K562 (cell line): ENCODE measurements at regions of chr19 and their contacts with region 1.

Region 1: DNA sequence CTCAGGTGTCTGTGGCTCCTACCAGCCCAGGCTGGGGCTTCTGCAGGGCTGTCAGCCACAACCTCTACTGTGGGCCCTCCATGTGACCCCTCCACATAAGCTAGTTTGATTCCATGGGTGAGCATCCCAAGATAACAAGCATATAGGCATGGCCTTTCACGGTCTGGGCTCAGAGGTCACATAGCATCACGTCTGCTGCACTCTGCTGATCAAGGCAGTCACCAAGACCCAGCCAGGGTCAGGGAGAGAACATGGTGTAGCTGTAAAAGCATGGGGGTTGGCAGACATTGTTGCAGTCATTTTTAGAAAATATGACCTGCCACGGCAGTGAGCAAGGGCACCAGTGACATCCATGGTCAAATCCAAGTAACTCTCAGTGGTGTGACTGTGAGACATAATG is 698.8 kb downstream of the UQCRFS1 start:
- DNase-seq: no peak
- ATAC-seq: peak; percentile 8
- H3K4me3 ChIP-seq: no peak overlapping the region
- H3K27ac ChIP-seq: no peak overlapping the region; the same call in 2 of the 3 replicates
- H3K4me1 ChIP-seq: peaks cover 12 to 43% of the 10 kb centered on the region in 2 experiments; a peak in 4 of 5 replicates
- H3K27me3 ChIP-seq: no peaks in the 10 kb centered on the region
- CTCF ChIP-seq: no peak
- EP300 ChIP-seq: no peak
- POLR2A ChIP-seq: no peak
- RAD21 ChIP-seq: no peak

Region 2: GRCh38 chr19:28504139-28504538 is 10.0 kb before region 1 on chr19:
- CTCF ChIA-PET with region 1: no interaction called
- POLR2A ChIA-PET with region 1: interaction called, 10 read pairs
- in situ Hi-C with region 1: no loop called
- intact Hi-C with region 1: no loop called
- DNase-seq: peak in 1 of 4 experiments; percentile 37
- ATAC-seq: peak; percentile 50
- H3K4me3 ChIP-seq: no peak overlapping the region
- H3K27ac ChIP-seq: peak overlapping the region; percentile 3; the same call in 1 of the 3 replicates
- H3K4me1 ChIP-seq: peaks cover 16 to 71% of the 10 kb centered on the region in 2 experiments
- H3K27me3 ChIP-seq: no peaks in the 10 kb centered on the region
- CTCF ChIP-seq: no peak
- EP300 ChIP-seq: 0 out of 2 replicates have a peak, but pooled peaks have one; percentile 8
- POLR2A ChIP-seq: no peak
- RAD21 ChIP-seq: no peak